Common myeloid progenitor, CD34-positive (primary cell): ENCODE measurements at regions of chr1 and their contacts with region 1.

Region 1: GRCh38 chr1:206885341-206886060 is 11.7 kb upstream of the IL24 start:
- DNase-seq: no peak
- H3K4me3 ChIP-seq: no peak overlapping the region
- H3K27ac ChIP-seq: no peak overlapping the region
- H3K4me1 ChIP-seq: peaks cover 0 to 2% (median under 1%) of the 10 kb centered on the region in 4 experiments
- H3K27me3 ChIP-seq: no peaks in the 10 kb centered on the region

Region 2: GRCh38 chr1:206895830-206896242 is 10.3 kb after region 1 on chr1:
- CTCF ChIA-PET with region 1: interaction called, 12 read pairs
- POLR2A ChIA-PET with region 1: no interaction called
- DNase-seq: no peak
- H3K4me3 ChIP-seq: no peak overlapping the region
- H3K27ac ChIP-seq: no peak overlapping the region
- H3K4me1 ChIP-seq: peaks cover 0 to 3% (median 0%) of the 10 kb centered on the region in 4 experiments
- H3K27me3 ChIP-seq: no peaks in the 10 kb centered on the region

Region 3: GRCh38 chr1:206971029-206971655 is 85.6 kb after region 1 on chr1:
- CTCF ChIA-PET with region 1: no interaction called
- POLR2A ChIA-PET with region 1: no interaction called
- DNase-seq: peak in 2 of 3 donors; percentile 19 to 22
- H3K4me3 ChIP-seq: no peak overlapping the region
- H3K27ac ChIP-seq: no peak overlapping the region
- H3K4me1 ChIP-seq: peaks cover 26 to 46% (median 30%) of the 10 kb centered on the region in 4 experiments
- H3K27me3 ChIP-seq: no peaks in the 10 kb centered on the region